ENCODE measurements at regions of chr2 and their contacts with region 1.

Region 1: DNA sequence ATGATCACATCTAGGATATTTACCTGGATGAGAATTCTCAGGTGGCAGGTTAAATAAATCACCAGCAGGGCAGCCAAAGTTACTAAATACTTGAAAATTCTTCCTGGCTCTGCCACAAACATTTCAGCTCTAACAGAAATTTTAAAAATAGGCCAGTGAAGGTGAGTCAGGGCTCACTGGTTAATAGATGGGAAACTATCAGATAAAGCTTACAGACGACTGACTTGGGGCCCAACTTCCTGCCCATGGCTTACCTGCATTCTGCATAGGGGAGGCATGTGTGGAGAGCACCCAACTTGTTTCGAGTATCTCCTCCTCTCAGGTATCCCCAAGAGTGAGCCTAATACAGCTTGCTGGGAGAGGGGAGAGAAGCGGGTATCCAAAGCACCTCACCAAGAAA is 57.8 kb downstream of the SPRED2 start:
- DNase-seq: no peak
- H3K4me3 Mint-ChIP-seq: no peak overlapping the region
- H3K27ac Mint-ChIP-seq: no peak overlapping the region
- H3K4me1 Mint-ChIP-seq: peaks cover 80% of the 10 kb centered on the region
- H3K27me3 Mint-ChIP-seq: no peaks in the 10 kb centered on the region
- CTCF ChIP-seq: no peak

Region 2: GRCh38 chr2:65320042-65320725 is 54.4 kb before region 1 on chr2:
- CTCF ChIA-PET with region 1: interaction called, 4 read pairs
- intact Hi-C with region 1: loop called (anchors 2 kb)
- DNase-seq: peak; percentile 53
- H3K4me3 Mint-ChIP-seq: peak overlapping the region; percentile 55
- H3K27ac Mint-ChIP-seq: peak overlapping the region; percentile 91
- H3K4me1 Mint-ChIP-seq: peaks cover 21% of the 10 kb centered on the region
- H3K27me3 Mint-ChIP-seq: no peaks in the 10 kb centered on the region
- CTCF ChIP-seq: peak; percentile 45